ENCODE measurements at regions of chr6 and their contacts with region 1.

Region 1: DNA sequence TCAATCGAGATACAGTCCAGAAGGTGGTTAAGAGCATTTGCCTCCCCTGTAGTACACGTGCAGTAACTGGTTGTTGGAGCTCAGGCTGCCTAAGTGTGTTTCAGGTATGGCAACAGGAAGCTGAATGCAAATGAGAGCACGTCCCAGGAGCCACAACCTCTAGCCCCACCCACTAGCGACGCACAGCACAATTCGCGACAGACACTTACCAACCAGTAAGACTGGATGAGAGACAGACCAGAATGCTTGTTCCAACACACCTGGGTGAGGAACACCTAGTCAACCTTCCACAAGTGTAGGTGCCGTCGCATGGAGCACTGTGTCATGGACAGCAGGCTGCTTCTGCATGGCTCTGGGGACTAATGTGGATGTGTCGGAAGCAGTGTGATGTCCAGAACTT is 7.2 kb upstream of the SERPINB1 start:
- DNase-seq: no peak
- ATAC-seq: no peak
- H3K4me3 ChIP-seq: no peak overlapping the region
- H3K27ac ChIP-seq: no peak overlapping the region
- H3K4me1 ChIP-seq: peaks cover 63% of the 10 kb centered on the region
- H3K27me3 ChIP-seq: no peaks in the 10 kb centered on the region
- CTCF ChIP-seq: no peak
- EP300 ChIP-seq: no peak
- POLR2A ChIP-seq: no peak
- RAD21 ChIP-seq: no peak

Region 2: GRCh38 chr6:2900821-2901644 is 52.2 kb after region 1 on chr6:
- CTCF ChIA-PET with region 1: no interaction called
- POLR2A ChIA-PET with region 1: interaction called, 11 read pairs
- in situ Hi-C with region 1: no loop called
- intact Hi-C with region 1: no loop called
- DNase-seq: no peak
- ATAC-seq: no peak
- H3K4me3 ChIP-seq: peak overlapping the region in 1 of 3 experiments; percentile 89; a peak in 1 of 6 replicates
- H3K27ac ChIP-seq: no peak overlapping the region
- H3K4me1 ChIP-seq: peaks cover 28% of the 10 kb centered on the region
- H3K27me3 ChIP-seq: peaks cover 0 to 8% of the 10 kb centered on the region in 2 experiments; a peak in 1 of 5 replicates
- CTCF ChIP-seq: no peak
- EP300 ChIP-seq: no peak
- POLR2A ChIP-seq: no peak
- RAD21 ChIP-seq: no peak

Region 3: GRCh38 chr6:2911171-2911570 is 62.3 kb after region 1 on chr6:
- CTCF ChIA-PET with region 1: interaction called, 39 read pairs
- POLR2A ChIA-PET with region 1: interaction called, 4 read pairs
- in situ Hi-C with region 1: loop called (anchors 5 kb)
- intact Hi-C with region 1: loop called (anchors 1 kb)
- DNase-seq: no peak
- ATAC-seq: no peak
- H3K4me3 ChIP-seq: no peak overlapping the region
- H3K27ac ChIP-seq: no peak overlapping the region
- H3K4me1 ChIP-seq: peaks cover 35% of the 10 kb centered on the region
- H3K27me3 ChIP-seq: peaks cover 0 to 20% of the 10 kb centered on the region in 2 experiments; a peak in 4 of 5 replicates
- CTCF ChIP-seq: no peak
- EP300 ChIP-seq: no peak
- POLR2A ChIP-seq: no peak
- RAD21 ChIP-seq: no peak

Region 4: GRCh38 chr6:2931970-2932748 is 83.3 kb after region 1 on chr6:
- CTCF ChIA-PET with region 1: interaction called, 42 read pairs
- POLR2A ChIA-PET with region 1: interaction called, 9 read pairs
- in situ Hi-C with region 1: no loop called
- intact Hi-C with region 1: loop called (anchors 1 kb)
- DNase-seq: peak; percentile 85
- ATAC-seq: peak; percentile 99
- H3K4me3 ChIP-seq: peak overlapping the region in 1 of 3 experiments; percentile 63; a peak in 2 of 6 replicates
- H3K27ac ChIP-seq: no peak overlapping the region
- H3K4me1 ChIP-seq: peaks cover 10% of the 10 kb centered on the region
- H3K27me3 ChIP-seq: peaks cover 0 to 3% of the 10 kb centered on the region in 2 experiments; a peak in 2 of 5 replicates
- CTCF ChIP-seq: peak; percentile 99
- EP300 ChIP-seq: no peak
- POLR2A ChIP-seq: no peak
- RAD21 ChIP-seq: peak; percentile 96

Measured in HepG2 (cell line).